Esophagus muscularis mucosa (tissue), 4 donors: ENCODE measurements at regions of chr20 and their contacts with region 1.

Region 1: GRCh38 chr20:58870239-58871014 is 17.9 kb downstream of the GNAS start:
- DNase-seq: no peak
- H3K4me3 ChIP-seq: no peak overlapping the region
- H3K27ac ChIP-seq: no peak overlapping the region
- H3K4me1 ChIP-seq: peaks cover 0 to 6% (median 2%) of the 10 kb centered on the region in 4 donors
- H3K27me3 ChIP-seq: no peaks in the 10 kb centered on the region
- CTCF ChIP-seq: peak; percentile 85 to 90 (median 88)
- EP300 ChIP-seq: no peak
- POLR2A ChIP-seq: no peak

Region 2: GRCh38 chr20:58659841-58660240 is 210.6 kb before region 1 on chr20:
- intact Hi-C with region 1: no loop called
- DNase-seq: peak; percentile 45
- H3K4me3 ChIP-seq: no peak overlapping the region
- H3K27ac ChIP-seq: peak overlapping the region in 1 of 4 donors; percentile 9
- H3K4me1 ChIP-seq: peaks cover 53 to 68% (median 64%) of the 10 kb centered on the region in 4 donors
- H3K27me3 ChIP-seq: no peaks in the 10 kb centered on the region
- CTCF ChIP-seq: no peak
- EP300 ChIP-seq: no peak
- POLR2A ChIP-seq: no peak

Region 3: GRCh38 chr20:58980700-58981627 is 110.5 kb after region 1 on chr20 and contains the start of gene NELFCD:
- intact Hi-C with region 1: loop called (anchors 5 kb)
- DNase-seq: peak; percentile 94
- H3K4me3 ChIP-seq: peak within 1 kb of the TSS; percentile 73 to 97 (median 84)
- H3K27ac ChIP-seq: peak within 1 kb of the TSS; percentile 81 to 83 (median 82)
- H3K4me1 ChIP-seq: peaks cover 33 to 49% (median 47%) of the 10 kb centered on the region in 4 donors
- H3K27me3 ChIP-seq: no peaks in the 10 kb centered on the region
- CTCF ChIP-seq: no peak
- EP300 ChIP-seq: no peak
- POLR2A ChIP-seq: no peak
- total RNA-seq, gene NELFCD: 30.5 to 41.5 (median 34.9) TPM

Region 4: GRCh38 chr20:59221049-59221706 is 350.8 kb after region 1 on chr20:
- intact Hi-C with region 1: loop called (anchors 2 kb)
- DNase-seq: peak; percentile 86
- H3K4me3 ChIP-seq: no peak overlapping the region
- H3K27ac ChIP-seq: peak overlapping the region in 2 of 4 donors; percentile 15 to 54
- H3K4me1 ChIP-seq: peaks cover 10 to 25% (median 22%) of the 10 kb centered on the region in 4 donors
- H3K27me3 ChIP-seq: peaks cover 0 to 51% (median 0%) of the 10 kb centered on the region in 4 donors
- CTCF ChIP-seq: peak in 1 of 3 experiments; percentile 5
- EP300 ChIP-seq: no peak
- POLR2A ChIP-seq: no peak

Region 5: DNA sequence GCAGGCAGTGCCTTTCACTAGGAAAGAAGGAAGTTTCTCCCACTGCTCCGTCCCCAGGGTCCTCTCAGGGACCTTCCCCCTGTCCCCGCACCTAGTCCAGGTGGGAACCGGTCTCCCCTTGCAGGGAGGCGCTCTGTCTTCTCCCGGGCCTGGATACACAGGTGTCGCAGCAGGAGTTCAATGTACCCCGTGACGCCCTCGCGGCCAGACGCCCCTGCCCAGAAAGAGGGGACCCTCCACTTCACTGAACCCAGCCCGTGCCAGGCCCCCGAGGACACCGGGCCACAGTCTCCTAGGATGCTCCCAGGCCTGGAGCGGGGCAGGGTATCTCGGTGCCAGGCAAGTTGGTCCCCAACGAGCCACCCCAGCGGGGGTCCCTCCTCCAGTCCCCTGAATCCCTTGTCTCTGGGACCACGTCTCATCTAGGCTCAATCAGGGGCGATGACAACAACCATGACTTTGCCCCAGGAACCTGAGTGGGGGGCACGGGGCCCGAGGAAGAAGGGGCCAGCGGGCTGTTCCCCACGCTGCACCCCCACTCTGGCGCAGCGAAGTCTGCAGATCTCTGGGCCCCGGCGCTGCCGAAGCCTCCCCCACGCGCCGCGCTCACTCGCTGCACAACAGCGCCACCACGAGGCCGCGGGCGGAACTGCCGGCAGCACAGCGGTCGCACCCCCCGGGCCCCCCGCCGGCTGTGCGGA is 533.0 kb after region 1 on chr20:
- intact Hi-C with region 1: loop called (anchors 5 kb)
- DNase-seq: no peak
- H3K4me3 ChIP-seq: peak overlapping the region in 2 of 4 donors; percentile 23 to 38
- H3K27ac ChIP-seq: no peak overlapping the region
- H3K4me1 ChIP-seq: peaks cover 9 to 23% (median 19%) of the 10 kb centered on the region in 4 donors
- H3K27me3 ChIP-seq: peaks cover 5 to 92% (median 26%) of the 10 kb centered on the region in 4 donors
- CTCF ChIP-seq: peak; percentile 74 to 90 (median 87)
- EP300 ChIP-seq: no peak
- POLR2A ChIP-seq: no peak

Region 6: GRCh38 chr20:59455402-59456341 is 585.2 kb after region 1 on chr20:
- intact Hi-C with region 1: loop called (anchors 5 kb)
- DNase-seq: no peak
- H3K4me3 ChIP-seq: peak overlapping the region in 1 of 4 donors; percentile 6
- H3K27ac ChIP-seq: no peak overlapping the region
- H3K4me1 ChIP-seq: peaks cover 0 to 17% (median 9%) of the 10 kb centered on the region in 4 donors
- H3K27me3 ChIP-seq: peaks cover 0 to 26% (median 0%) of the 10 kb centered on the region in 4 donors
- CTCF ChIP-seq: peak; percentile 57 to 71 (median 65)
- EP300 ChIP-seq: no peak
- POLR2A ChIP-seq: no peak